ENCODE measurements at regions of chr7 and their contacts with region 1.

Region 1: GRCh38 chr7:82714883-82715282 is 271.3 kb upstream of the CACNA2D1 start:
- DNase-seq: no peak
- H3K4me3 ChIP-seq: no peak overlapping the region
- H3K27ac ChIP-seq: no peak overlapping the region
- H3K4me1 ChIP-seq: no peaks in the 10 kb centered on the region
- H3K27me3 ChIP-seq: no peaks in the 10 kb centered on the region
- CTCF ChIP-seq: no peak
- EP300 ChIP-seq: no peak
- POLR2A ChIP-seq: no peak

Region 2: DNA sequence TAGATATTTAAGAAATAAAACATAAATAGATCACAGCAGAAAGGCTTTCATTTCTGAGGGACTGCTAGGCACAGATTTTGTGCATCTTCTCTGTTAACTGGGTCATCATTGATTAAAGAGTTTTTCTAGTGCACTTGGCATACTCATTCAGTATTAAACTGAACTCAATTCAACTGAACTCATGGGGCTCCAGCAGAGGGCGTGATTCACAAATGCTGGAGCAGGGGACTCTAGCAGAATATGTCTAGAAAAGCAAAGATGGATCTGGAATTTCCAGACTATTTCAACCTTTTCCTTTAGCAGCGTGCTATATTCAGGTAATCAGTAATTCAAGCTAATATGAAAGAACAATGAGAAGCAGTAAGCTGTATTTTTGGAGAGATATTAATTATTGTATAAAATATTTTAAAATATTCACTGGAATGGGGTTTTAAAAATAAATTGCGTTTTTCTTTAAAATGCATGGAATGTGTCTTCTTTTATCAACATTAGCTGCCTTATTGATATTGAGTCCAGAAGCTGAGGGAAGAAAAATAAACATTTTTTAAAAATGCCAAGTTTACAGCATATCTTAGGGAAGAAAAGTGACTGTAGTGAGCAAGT is 25.5 kb after region 1 on chr7:
- in situ Hi-C with region 1: no loop called
- intact Hi-C with region 1: no loop called
- DNase-seq: peak; percentile 19
- H3K4me3 ChIP-seq: no peak overlapping the region
- H3K27ac ChIP-seq: no peak overlapping the region
- H3K4me1 ChIP-seq: no peaks in the 10 kb centered on the region
- H3K27me3 ChIP-seq: no peaks in the 10 kb centered on the region
- CTCF ChIP-seq: peak in 3 of 5 experiments; percentile 10 to 32 (median 29)
- EP300 ChIP-seq: no peak
- POLR2A ChIP-seq: no peak

Region 3: DNA sequence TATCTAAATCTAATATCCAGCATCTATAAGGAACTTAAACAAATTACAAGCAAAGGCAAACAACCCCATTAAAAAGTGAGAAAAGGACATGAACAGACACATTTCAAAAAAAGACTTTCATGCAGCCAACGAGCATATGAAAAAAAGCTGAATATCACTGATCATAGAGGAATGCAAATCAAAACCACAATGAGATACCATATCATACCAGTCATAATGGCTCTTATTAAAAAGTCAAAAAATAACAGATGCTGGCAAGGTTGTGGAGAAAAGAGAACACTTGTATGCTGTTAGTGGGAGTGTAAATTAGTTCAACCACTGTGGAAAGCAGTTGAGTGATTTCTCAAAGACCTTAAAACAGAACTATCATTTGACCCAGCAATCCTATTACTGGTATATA is 63.1 kb after region 1 on chr7:
- in situ Hi-C with region 1: no loop called
- intact Hi-C with region 1: loop called (anchors 10 kb)
- DNase-seq: no peak
- H3K4me3 ChIP-seq: no peak overlapping the region
- H3K27ac ChIP-seq: no peak overlapping the region
- H3K4me1 ChIP-seq: no peaks in the 10 kb centered on the region
- H3K27me3 ChIP-seq: no peaks in the 10 kb centered on the region
- CTCF ChIP-seq: no peak
- EP300 ChIP-seq: no peak
- POLR2A ChIP-seq: no peak

Measured in transverse colon (tissue), 4 donors.